Pancreas (tissue), 10 donors: ENCODE measurements at regions of chr4 and their contacts with region 1.

Region 1: GRCh38 chr4:155822572-155822971 is 43.5 kb downstream of the ASIC5 start:
- DNase-seq: no peak
- ATAC-seq: no peak
- H3K4me3 ChIP-seq: no peak overlapping the region
- H3K27ac ChIP-seq: no peak overlapping the region
- H3K4me1 ChIP-seq: no peaks in the 10 kb centered on the region
- H3K27me3 ChIP-seq: no peaks in the 10 kb centered on the region
- CTCF ChIP-seq: no peak

Region 2: GRCh38 chr4:155946486-155946885 is 123.9 kb after region 1 on chr4:
- intact Hi-C with region 1: loop called in 1 of 3 experiments (anchors 10 kb)
- DNase-seq: no peak
- ATAC-seq: no peak
- H3K4me3 ChIP-seq: no peak overlapping the region
- H3K27ac ChIP-seq: no peak overlapping the region
- H3K4me1 ChIP-seq: peaks cover 0 to 5% (median 4%) of the 10 kb centered on the region in 3 donors
- H3K27me3 ChIP-seq: no peaks in the 10 kb centered on the region
- CTCF ChIP-seq: no peak